Activated naive CD4-positive, alpha-beta T cell treated with anti-CD3 and anti-CD28 coated beads for 36 hours (primary cell): ENCODE measurements at regions of chr11 and their contacts with region 1.

Region 1: DNA sequence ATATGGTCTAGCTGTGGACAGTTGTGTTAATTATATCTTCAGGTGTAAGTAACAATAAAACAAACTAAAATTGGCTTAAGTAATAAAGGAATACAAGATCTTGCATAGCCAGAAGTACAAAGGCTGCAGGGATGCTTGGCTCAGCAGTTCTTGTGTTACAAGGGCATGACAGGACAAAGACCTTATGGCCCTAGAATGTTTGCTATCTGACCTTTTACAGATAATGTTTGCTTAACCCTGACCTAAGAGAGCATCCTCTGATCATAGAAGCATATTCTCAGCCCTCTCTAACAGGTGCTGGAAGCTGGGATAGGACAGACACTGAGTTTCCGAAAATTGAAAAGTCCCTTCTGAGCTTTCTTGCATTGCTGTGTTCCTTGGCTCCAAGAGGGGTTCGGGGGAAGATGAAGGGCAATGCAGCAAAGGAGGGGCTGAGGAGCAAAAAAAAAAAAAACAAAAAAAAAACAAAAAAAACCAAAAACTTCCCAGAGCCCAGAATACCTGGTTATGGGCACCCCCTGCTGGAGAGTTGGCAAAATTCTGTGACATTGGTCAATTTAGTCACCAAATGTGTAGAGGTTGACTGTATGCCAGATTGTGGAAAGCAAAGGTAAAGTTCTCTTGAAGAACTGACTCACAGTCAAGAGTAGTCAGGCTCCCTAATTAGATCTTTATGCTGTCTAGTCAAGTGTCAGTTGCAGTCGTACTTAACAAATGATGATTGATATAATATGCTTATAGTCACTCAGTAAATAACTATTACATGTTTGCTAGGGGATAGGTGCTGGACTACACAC is 10.4 kb upstream of the HIKESHI start:
- DNase-seq: peak; percentile 88
- H3K4me3 Mint-ChIP-seq: no peak overlapping the region
- H3K27ac Mint-ChIP-seq: peak overlapping the region; percentile 53
- H3K4me1 Mint-ChIP-seq: peaks cover 58% of the 10 kb centered on the region
- H3K27me3 Mint-ChIP-seq: no peaks in the 10 kb centered on the region

Region 2: GRCh38 chr11:85627998-85628770 is 663.5 kb before region 1 on chr11 and contains the start of gene TMEM126B:
- CTCF ChIA-PET with region 1: no interaction called
- intact Hi-C with region 1: loop called (anchors 1 kb)
- DNase-seq: peak; percentile 98
- H3K4me3 Mint-ChIP-seq: peak within 1 kb of the TSS; percentile 99
- H3K27ac Mint-ChIP-seq: peak within 1 kb of the TSS; percentile 96
- H3K4me1 Mint-ChIP-seq: peaks cover 33% of the 10 kb centered on the region
- H3K27me3 Mint-ChIP-seq: no peaks in the 10 kb centered on the region
- total RNA-seq, gene TMEM126B: 72.6 to 79.0 TPM

Region 3: GRCh38 chr11:85826116-85826855 is 465.4 kb before region 1 on chr11:
- CTCF ChIA-PET with region 1: interaction called, 3 read pairs
- intact Hi-C with region 1: loop called (anchors 1 kb)
- DNase-seq: peak; percentile 51
- H3K4me3 Mint-ChIP-seq: peak overlapping the region; percentile 28
- H3K27ac Mint-ChIP-seq: peak overlapping the region; percentile 20
- H3K4me1 Mint-ChIP-seq: peaks cover 57% of the 10 kb centered on the region
- H3K27me3 Mint-ChIP-seq: no peaks in the 10 kb centered on the region

Region 4: GRCh38 chr11:85991514-85991913 is 300.1 kb before region 1 on chr11:
- CTCF ChIA-PET with region 1: no interaction called
- intact Hi-C with region 1: no loop called
- DNase-seq: no peak
- H3K4me3 Mint-ChIP-seq: no peak overlapping the region
- H3K27ac Mint-ChIP-seq: no peak overlapping the region
- H3K4me1 Mint-ChIP-seq: peaks cover 8% of the 10 kb centered on the region
- H3K27me3 Mint-ChIP-seq: no peaks in the 10 kb centered on the region

Region 5: DNA sequence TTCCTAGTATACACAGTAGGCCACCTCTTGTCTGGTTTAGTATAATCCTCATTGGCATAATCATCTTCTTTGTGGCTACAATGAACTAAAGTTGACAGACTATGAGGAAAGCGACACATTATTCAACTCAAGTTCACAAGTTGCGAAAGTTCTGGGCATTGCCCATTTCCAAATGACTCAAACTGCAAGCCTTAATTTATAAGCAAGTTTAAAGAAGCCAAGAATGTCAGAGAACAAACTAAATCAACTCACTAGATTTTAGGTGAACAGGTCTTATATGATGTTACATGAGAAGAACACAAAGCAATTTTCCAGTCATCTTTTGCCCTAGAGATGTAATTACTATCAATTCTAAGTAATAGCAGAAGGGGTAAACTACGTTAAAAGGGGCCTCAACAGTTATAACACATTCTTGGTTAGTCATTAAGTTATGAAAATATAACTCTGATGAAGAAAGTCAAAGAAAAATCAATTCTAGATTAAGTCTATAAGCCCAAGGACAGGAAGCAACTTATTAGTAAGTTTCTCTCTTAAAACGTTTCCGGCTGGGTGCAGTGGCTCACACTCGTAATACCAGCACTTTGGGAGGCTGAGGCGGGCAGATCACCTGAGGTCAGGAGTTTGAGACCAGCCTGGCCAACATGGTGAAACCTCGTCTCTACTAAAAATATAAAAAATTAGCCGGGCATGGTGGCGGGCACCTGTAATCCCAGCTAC is 244.2 kb before region 1 on chr11:
- CTCF ChIA-PET with region 1: interaction called, 13 read pairs
- intact Hi-C with region 1: loop called (anchors 1 kb)
- DNase-seq: peak; percentile 69
- H3K4me3 Mint-ChIP-seq: peak overlapping the region; percentile 43
- H3K27ac Mint-ChIP-seq: peak overlapping the region; percentile 93
- H3K4me1 Mint-ChIP-seq: peaks cover 92% of the 10 kb centered on the region
- H3K27me3 Mint-ChIP-seq: no peaks in the 10 kb centered on the region

Region 6: GRCh38 chr11:86124834-86125233 is 166.8 kb before region 1 on chr11:
- CTCF ChIA-PET with region 1: no interaction called
- intact Hi-C with region 1: no loop called
- DNase-seq: peak; percentile 13
- H3K4me3 Mint-ChIP-seq: no peak overlapping the region
- H3K27ac Mint-ChIP-seq: peak overlapping the region; percentile 2
- H3K4me1 Mint-ChIP-seq: peaks cover 23% of the 10 kb centered on the region
- H3K27me3 Mint-ChIP-seq: peaks cover 11% of the 10 kb centered on the region

Region 7: DNA sequence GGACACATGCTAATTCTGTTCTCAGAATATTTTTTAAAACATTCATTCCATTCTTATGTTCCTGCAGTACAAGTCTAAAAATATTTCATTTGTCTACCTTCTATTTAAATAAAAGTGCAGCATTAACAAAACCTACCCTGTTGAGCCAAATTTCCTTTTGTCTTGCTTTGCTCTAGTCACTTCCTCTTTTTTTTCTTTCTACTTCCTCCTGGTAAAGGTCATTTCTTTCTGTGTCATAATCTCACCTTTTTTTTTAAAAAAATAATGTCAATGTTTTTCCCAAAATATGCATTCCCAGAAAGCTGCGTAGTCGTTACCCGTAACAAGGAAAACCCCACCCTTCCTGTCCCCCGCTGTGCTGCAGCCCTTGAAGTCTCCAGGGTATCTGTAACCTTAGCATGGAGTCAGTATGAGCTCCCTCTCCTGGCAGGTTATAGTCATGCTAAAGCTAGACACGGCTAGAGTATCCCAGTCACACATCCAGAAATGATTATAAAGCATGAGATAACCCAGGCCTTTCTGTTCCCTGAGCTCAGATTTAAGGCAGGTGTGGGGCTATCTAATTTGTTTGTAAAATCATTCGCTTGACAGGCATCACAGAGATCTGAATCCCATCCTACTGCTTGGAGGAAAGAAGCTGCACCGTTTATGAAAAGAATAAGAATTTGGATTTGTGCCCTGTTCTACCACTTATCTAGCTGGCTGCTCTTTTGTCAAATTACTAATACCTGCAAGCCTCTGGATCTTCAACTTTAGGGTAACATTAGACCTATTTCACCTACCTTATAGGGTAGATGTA is 98.2 kb before region 1 on chr11:
- CTCF ChIA-PET with region 1: interaction called, 13 read pairs
- intact Hi-C with region 1: loop called (anchors 1 kb)
- DNase-seq: peak; percentile 74
- H3K4me3 Mint-ChIP-seq: peak overlapping the region; percentile 52
- H3K27ac Mint-ChIP-seq: peak overlapping the region; percentile 73
- H3K4me1 Mint-ChIP-seq: peaks cover 19% of the 10 kb centered on the region
- H3K27me3 Mint-ChIP-seq: no peaks in the 10 kb centered on the region

Region 8: GRCh38 chr11:86255896-86256295 is 35.8 kb before region 1 on chr11:
- CTCF ChIA-PET with region 1: no interaction called
- intact Hi-C with region 1: loop called (anchors 1 kb)
- DNase-seq: no peak
- H3K4me3 Mint-ChIP-seq: no peak overlapping the region
- H3K27ac Mint-ChIP-seq: peak overlapping the region; percentile 69
- H3K4me1 Mint-ChIP-seq: peaks cover 54% of the 10 kb centered on the region
- H3K27me3 Mint-ChIP-seq: no peaks in the 10 kb centered on the region

Region 9: GRCh38 chr11:86370922-86371594 is 79.4 kb after region 1 on chr11:
- CTCF ChIA-PET with region 1: no interaction called
- intact Hi-C with region 1: no loop called
- DNase-seq: no peak
- H3K4me3 Mint-ChIP-seq: no peak overlapping the region
- H3K27ac Mint-ChIP-seq: no peak overlapping the region
- H3K4me1 Mint-ChIP-seq: peaks cover 7% of the 10 kb centered on the region
- H3K27me3 Mint-ChIP-seq: peaks cover 11% of the 10 kb centered on the region

Region 10: DNA sequence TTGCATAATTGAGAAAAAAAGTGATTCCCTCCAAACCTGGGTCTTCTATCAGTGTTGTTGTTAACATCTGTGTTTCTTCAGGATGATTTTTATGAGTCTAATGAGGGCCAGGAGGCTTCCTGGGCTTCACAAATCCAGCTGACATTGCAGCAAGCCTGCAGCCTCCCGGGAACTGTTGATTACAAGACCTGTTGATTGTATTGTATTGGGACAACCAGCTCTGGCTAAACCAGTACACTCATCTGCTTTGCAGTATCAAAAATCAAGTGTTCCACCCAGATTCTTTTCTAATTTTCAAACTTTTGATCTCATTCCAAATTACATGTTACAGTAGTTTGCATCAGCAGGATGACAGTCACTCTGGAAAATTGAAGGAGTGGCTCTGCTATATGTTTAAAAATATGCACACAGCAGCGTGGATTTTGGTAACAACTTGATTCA is 492.6 kb after region 1 on chr11:
- CTCF ChIA-PET with region 1: no interaction called
- intact Hi-C with region 1: no loop called
- DNase-seq: no peak
- H3K4me3 Mint-ChIP-seq: no peak overlapping the region
- H3K27ac Mint-ChIP-seq: no peak overlapping the region
- H3K4me1 Mint-ChIP-seq: no peaks in the 10 kb centered on the region
- H3K27me3 Mint-ChIP-seq: peaks cover 16% of the 10 kb centered on the region

Region 11: GRCh38 chr11:86802601-86803051 is 511.0 kb after region 1 on chr11:
- CTCF ChIA-PET with region 1: interaction called, 3 read pairs
- intact Hi-C with region 1: loop called (anchors 1 kb)
- DNase-seq: peak; percentile 38
- H3K4me3 Mint-ChIP-seq: no peak overlapping the region
- H3K27ac Mint-ChIP-seq: no peak overlapping the region
- H3K4me1 Mint-ChIP-seq: peaks cover 53% of the 10 kb centered on the region
- H3K27me3 Mint-ChIP-seq: peaks cover 46% of the 10 kb centered on the region